Right ventricle myocardium inferior (tissue), 1 donor: ENCODE measurements at regions of chr13 and their contacts with region 1.

Region 1: GRCh38 chr13:43915451-43915850 is 35.7 kb downstream of the LACC1 start:
- DNase-seq: no peak
- ATAC-seq: no peak

Region 2: DNA sequence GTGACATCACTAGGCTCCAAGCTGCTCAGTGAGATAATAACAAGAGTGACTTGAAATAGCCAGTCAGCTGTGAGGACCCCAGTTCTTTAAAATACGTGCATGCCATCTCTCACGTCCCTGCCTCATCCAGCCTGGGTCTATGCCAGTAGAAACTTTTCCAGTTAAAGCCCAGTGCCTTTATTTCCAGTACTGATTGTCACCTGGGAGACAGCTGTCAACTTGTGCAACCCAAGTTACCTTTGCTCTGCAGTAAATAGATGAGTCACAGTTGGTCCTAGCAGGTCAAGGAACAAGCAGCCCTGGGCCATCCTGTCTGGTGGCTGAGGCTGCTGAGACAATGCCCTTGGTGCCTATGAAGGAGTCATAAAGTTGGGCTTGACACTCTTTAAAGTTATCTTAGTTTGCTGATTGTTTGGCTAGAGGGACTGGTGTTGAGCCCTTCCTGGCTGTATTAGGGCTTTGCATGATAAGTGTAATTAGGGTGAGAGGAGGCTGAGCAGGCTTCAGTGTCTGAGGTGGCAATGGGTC is 192.9 kb after region 1 on chr13:
- intact Hi-C with region 1: loop called (anchors 5 kb)
- DNase-seq: peak; percentile 69
- ATAC-seq: peak; percentile 88

Region 3: DNA sequence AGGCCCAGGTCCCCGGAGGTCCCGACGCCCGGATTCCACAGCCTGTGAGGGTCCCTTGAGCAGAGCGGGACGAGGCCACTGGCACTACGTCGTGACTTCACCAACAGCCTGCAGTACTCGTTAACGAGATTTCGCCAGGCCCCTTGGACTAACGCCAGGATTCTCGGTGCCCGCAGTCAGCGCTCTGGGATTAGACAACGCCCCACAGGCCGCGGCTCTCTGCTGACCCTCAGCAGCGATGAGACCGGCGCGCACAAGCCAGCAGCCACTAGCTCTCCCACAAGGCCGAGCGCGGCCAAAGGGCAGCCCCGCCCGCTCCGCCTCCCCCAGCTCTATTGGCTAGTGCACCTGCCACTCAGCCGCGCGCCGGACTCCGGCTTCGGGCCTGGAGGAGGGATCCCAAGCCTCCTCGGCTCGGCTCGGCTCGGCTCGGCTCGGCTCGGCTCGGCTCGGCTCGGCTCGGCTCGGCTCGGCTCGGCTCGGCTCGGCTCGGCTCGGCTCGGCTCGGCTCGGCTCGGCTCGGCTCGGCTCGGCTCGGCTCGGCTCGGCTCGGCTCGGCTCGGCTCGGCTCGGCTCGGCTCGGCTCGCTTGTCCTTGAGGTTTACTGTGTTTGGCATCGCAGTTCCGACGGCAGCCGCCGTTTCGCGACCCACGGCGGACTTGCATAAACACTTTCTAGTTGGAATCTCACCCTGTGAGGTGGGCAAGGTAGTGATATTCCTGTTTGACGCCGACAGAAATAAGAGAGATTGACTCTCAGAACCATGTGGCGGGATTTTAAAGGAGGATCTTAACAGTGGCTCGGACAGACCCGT is 226.5 kb after region 1 on chr13:
- intact Hi-C with region 1: loop called (anchors 10 kb)
- DNase-seq: peak; percentile 99
- ATAC-seq: peak; percentile 100